ENCODE measurements at regions of chr10 and their contacts with region 1.

Region 1: DNA sequence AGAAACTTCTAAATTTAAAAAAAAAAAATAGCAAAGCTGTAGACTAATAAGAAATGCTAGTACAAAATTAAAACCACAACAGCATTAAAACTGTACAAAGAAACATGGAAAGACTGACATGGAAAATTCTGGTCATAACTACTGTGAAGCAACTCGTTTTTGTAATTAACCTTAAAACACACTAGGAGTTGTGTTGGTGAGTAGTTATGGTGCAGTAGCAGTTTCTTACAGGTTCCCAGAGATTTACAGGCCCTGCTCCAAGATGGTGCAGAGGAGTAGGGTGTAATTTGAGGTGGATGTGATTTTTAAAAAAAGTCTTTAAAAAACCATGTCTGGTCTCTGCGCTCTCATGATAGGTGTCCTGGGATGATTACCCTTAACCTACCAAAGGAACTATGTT is 31.0 kb downstream of the TNKS2 start:
- DNase-seq: no peak
- ATAC-seq: no peak
- H3K4me3 ChIP-seq: no peak overlapping the region
- H3K27ac ChIP-seq: no peak overlapping the region
- H3K4me1 ChIP-seq: no peaks in the 10 kb centered on the region
- H3K27me3 ChIP-seq: no peaks in the 10 kb centered on the region
- CTCF ChIP-seq: no peak

Region 2: GRCh38 chr10:91864099-91864498 is 34.8 kb after region 1 on chr10:
- intact Hi-C with region 1: loop called in 2 of 10 experiments (anchors 5 kb)
- DNase-seq: no peak
- ATAC-seq: no peak
- H3K4me3 ChIP-seq: no peak overlapping the region
- H3K27ac ChIP-seq: no peak overlapping the region
- H3K4me1 ChIP-seq: no peaks in the 10 kb centered on the region
- H3K27me3 ChIP-seq: no peaks in the 10 kb centered on the region
- CTCF ChIP-seq: no peak

Measured in heart right ventricle (tissue), 16 donors.